Activated CD4-positive, alpha-beta T cell treated with anti-CD3 and anti-CD28 coated beads, Interleukin-2, amount 10 ng/mL, durations not matched to agents 7 days and 5 days (primary cell): ENCODE measurements at regions of chr6 and their contacts with region 1.

Region 1: GRCh38 chr6:31145386-31145785 is 6.5 kb upstream of the PSORS1C2 start:
- DNase-seq: no peak
- H3K4me3 Mint-ChIP-seq: no peak overlapping the region
- H3K27ac Mint-ChIP-seq: no peak overlapping the region
- H3K4me1 Mint-ChIP-seq: no peaks in the 10 kb centered on the region
- H3K27me3 Mint-ChIP-seq: no peaks in the 10 kb centered on the region

Region 2: DNA sequence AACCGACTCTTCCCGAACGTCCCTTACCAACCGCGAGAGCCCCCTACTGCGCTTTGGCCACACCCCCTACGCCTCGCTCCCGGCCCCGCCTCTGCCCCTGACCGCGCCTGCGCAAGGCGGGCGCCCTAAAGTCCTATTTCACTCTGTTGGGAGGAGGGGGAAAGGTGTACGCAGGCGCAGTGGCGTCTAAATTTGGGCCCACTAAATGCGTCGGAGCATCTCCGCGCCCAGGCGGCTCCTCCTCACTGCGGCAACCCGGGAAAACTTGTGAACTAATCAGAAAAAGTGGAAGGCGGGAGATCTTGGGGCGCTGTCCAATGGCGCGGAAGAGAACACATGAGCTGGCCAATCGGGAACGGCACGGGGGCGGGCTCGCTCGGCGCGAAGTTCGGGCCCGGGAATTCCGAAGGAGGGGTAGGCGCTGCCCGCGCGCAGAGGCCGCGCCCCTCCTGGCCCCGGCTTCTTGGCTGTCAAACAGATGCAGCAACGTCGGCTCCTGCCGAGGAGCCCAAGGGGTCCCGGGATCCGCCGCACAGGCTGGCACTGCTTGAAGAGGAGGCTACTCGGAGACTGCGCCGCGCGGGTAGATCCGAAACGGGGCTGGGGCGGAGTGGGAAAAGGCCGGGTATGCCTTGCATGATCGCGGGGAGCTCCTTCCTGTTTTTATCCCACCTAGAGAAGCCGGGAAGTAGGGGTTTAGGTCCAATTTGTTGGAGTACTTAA is 12.9 kb after region 1 on chr6 and contains the start of gene TCF19:
- CTCF ChIA-PET with region 1: interaction called, 16 read pairs
- POLR2A ChIA-PET with region 1: no interaction called
- DNase-seq: peak; percentile 99
- H3K4me3 Mint-ChIP-seq: peak within 1 kb of the TSS; percentile 87
- H3K27ac Mint-ChIP-seq: peak within 1 kb of the TSS; percentile 84
- H3K4me1 Mint-ChIP-seq: peaks cover 46% of the 10 kb centered on the region
- H3K27me3 Mint-ChIP-seq: no peaks in the 10 kb centered on the region
- total RNA-seq, gene TCF19: 86.3 to 86.7 TPM